ENCODE measurements at regions of chr18 and their contacts with region 1.

Region 1: DNA sequence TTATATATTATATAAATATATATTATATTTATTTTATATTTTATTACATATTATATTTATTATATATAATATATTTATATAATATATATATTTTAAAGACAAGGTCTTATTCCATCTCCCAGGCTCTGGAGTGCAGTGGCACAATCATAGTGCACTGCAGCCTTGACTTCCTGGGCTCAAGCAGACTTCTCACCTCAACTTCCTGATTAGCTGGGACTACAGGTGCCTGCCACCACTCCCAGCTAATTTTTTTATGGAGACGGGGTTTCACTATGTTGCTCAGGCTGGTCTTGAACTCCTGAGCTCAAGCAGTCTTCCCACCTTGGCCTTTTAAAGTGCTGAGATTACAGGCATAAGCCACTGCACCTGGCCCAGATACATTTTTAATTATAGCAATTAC is 110.0 kb downstream of the PHLPP1 start:
- DNase-seq: no peak
- ATAC-seq: no peak
- H3K4me3 ChIP-seq: no peak overlapping the region
- H3K27ac ChIP-seq: no peak overlapping the region
- H3K4me1 ChIP-seq: peaks cover 0 to 18% (median 6%) of the 10 kb centered on the region in 12 donors
- H3K27me3 ChIP-seq: no peaks in the 10 kb centered on the region
- CTCF ChIP-seq: no peak
- POLR2A ChIP-seq: no peak

Region 2: GRCh38 chr18:62729487-62730386 is 95.6 kb before region 1 on chr18:
- intact Hi-C with region 1: no loop called
- DNase-seq: no peak
- ATAC-seq: no peak
- H3K4me3 ChIP-seq: no peak overlapping the region
- H3K27ac ChIP-seq: no peak overlapping the region
- H3K4me1 ChIP-seq: peaks cover 0 to 10% (median 0%) of the 10 kb centered on the region in 12 donors
- H3K27me3 ChIP-seq: no peaks in the 10 kb centered on the region
- CTCF ChIP-seq: no peak
- POLR2A ChIP-seq: no peak

Region 3: GRCh38 chr18:62837011-62837410 is 11.6 kb after region 1 on chr18:
- intact Hi-C with region 1: loop called in 1 of 10 experiments (anchors 1 kb)
- DNase-seq: no peak
- ATAC-seq: no peak
- H3K4me3 ChIP-seq: no peak overlapping the region
- H3K27ac ChIP-seq: no peak overlapping the region
- H3K4me1 ChIP-seq: peaks cover 0 to 13% (median 5%) of the 10 kb centered on the region in 12 donors
- H3K27me3 ChIP-seq: no peaks in the 10 kb centered on the region
- CTCF ChIP-seq: no peak
- POLR2A ChIP-seq: no peak

Region 4: GRCh38 chr18:62897153-62897552 is 71.8 kb after region 1 on chr18:
- intact Hi-C with region 1: no loop called
- DNase-seq: no peak
- ATAC-seq: no peak
- H3K4me3 ChIP-seq: no peak overlapping the region
- H3K27ac ChIP-seq: no peak overlapping the region
- H3K4me1 ChIP-seq: no peaks in the 10 kb centered on the region
- H3K27me3 ChIP-seq: no peaks in the 10 kb centered on the region
- CTCF ChIP-seq: no peak
- POLR2A ChIP-seq: no peak